Mammary epithelial cell (primary cell): ENCODE measurements at regions of chr20 and their contacts with region 1.

Region 1: GRCh38 chr20:63775096-63775978 is 35.8 kb downstream of the SLC2A4RG start:
- DNase-seq: no peak
- H3K4me3 ChIP-seq: no peak overlapping the region
- H3K27ac ChIP-seq: no peak overlapping the region
- H3K4me1 ChIP-seq: no peaks in the 10 kb centered on the region
- H3K27me3 ChIP-seq: no peaks in the 10 kb centered on the region
- CTCF ChIP-seq: peak; percentile 18 to 38

Region 2: GRCh38 chr20:63734111-63734945 is 41.0 kb before region 1 on chr20:
- CTCF ChIA-PET with region 1: no interaction called
- dilution Hi-C with region 1: loop called (anchors 5 kb)
- in situ Hi-C with region 1: no loop called
- intact Hi-C with region 1: no loop called
- DNase-seq: no peak
- H3K4me3 ChIP-seq: no peak overlapping the region
- H3K27ac ChIP-seq: no peak overlapping the region
- H3K4me1 ChIP-seq: peaks cover 21% of the 10 kb centered on the region
- H3K27me3 ChIP-seq: no peaks in the 10 kb centered on the region
- CTCF ChIP-seq: no peak

Region 3: DNA sequence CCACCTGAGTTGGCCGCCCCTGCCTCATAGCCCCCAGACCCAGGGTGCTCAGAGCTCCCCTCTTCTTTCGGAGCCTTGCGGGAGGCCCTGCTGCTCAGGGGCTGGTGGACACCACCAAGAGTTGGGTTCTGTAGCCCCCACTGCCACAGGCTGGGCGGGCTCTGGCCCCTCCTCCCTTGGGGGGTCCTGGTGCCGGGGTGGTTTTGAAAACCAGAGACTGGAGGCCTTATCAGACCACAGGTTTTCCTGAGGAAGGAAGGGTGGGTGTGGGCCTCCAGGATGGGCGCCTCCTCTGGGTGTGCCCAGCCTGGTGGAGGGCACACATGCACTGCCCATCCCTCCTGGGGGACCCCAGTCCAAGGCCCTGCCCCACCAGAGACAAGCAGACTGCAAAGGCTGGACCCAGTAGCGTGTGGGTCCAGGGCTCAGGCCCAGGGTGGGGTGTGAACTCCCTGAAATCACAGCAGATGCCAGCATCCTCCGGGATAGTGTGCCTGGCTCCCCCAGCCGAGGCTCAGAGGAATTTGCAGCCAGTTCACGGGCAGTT is 69.2 kb after region 1 on chr20:
- CTCF ChIA-PET with region 1: no interaction called
- dilution Hi-C with region 1: loop called (anchors 5 kb)
- in situ Hi-C with region 1: no loop called
- intact Hi-C with region 1: no loop called
- DNase-seq: no peak
- H3K4me3 ChIP-seq: no peak overlapping the region
- H3K27ac ChIP-seq: no peak overlapping the region
- H3K4me1 ChIP-seq: peaks cover 10% of the 10 kb centered on the region
- H3K27me3 ChIP-seq: peaks cover 8% of the 10 kb centered on the region
- CTCF ChIP-seq: no peak